Naive thymus-derived CD8-positive, alpha-beta T cell (primary cell): ENCODE measurements at regions of chr3 and their contacts with region 1.

Region 1: DNA sequence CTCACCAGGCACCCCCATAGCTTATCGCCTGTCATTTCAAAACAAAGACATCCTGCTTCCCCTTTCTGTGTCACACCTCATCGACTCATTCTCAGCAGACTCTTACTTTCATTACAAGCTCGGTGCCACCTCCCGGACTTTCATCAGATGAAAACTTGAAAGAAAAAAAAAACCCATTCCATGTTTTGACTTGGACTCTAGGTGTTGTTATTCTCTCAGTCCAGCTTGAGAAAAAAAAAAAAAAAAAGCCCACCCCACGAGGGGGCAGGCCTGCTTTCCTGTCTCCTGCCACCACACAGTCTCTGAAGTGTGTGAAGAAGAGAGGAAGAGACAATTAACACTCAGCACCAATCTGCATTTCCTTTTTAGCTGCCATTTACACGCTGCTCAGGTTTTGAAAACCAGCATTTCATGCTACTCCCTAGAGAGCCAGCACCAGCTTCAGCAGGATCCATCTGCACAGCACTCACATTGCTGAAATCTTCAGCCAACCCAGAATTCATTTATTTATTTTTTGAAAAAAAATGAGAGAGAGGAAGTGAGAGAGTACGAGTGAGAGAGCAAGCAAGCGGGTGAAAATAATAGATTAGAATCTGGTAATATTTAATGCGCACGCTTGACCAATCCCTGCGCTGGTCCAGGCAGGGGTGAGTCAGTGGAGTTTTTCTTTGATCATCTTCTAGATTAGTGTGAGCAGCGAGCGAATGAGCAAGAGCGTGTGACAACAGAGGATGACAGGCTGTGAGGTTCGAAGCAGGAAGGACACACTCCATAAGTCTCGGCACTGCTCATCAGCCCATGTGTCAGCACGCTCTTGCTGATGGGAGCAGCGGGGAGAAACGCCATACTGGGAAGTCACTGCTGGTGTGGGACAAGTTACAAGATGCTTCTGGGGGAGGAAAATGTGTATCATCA is 23.5 kb downstream of the ZNF80 start:
- DNase-seq: peak; percentile 28 to 86 (median 68)
- ATAC-seq: peak; percentile 50 to 53
- H3K4me3 Mint-ChIP-seq: no peak overlapping the region
- H3K27ac Mint-ChIP-seq: no peak overlapping the region
- H3K4me1 Mint-ChIP-seq: peaks cover 0 to 21% (median 14%) of the 10 kb centered on the region in 4 donors
- H3K27me3 Mint-ChIP-seq: no peaks in the 10 kb centered on the region

Region 2: DNA sequence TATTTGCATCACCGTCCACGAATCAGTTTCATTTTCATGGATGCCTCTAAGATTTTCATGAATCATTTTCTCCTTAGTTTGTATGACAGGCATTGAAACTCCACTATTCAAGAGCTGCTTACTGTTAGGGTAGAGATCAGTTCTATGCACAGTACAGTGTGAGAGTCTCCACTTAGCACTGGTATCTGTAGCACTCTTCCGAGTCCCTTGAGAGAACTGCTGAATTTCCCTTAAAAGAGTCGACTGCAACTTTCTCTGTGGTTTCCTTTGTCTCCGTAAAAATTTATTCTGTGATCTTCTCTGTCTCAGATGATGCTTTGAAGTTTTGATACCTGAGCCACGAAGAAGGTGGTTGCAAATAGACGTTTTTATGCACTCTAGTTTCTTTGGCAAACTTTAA is 1208.3 kb before region 1 on chr3:
- POLR2A ChIA-PET with region 1: interaction called, 10 read pairs
- DNase-seq: peak in 5 of 10 donors; percentile 18 to 81 (median 61)
- ATAC-seq: peak; percentile 89 to 90
- H3K4me3 Mint-ChIP-seq: peak overlapping the region; percentile 57 to 87 (median 78)
- H3K27ac Mint-ChIP-seq: peak overlapping the region; percentile 89 to 98 (median 95)
- H3K4me1 Mint-ChIP-seq: peaks cover 34 to 84% (median 74%) of the 10 kb centered on the region in 4 donors
- H3K27me3 Mint-ChIP-seq: no peaks in the 10 kb centered on the region

Region 3: DNA sequence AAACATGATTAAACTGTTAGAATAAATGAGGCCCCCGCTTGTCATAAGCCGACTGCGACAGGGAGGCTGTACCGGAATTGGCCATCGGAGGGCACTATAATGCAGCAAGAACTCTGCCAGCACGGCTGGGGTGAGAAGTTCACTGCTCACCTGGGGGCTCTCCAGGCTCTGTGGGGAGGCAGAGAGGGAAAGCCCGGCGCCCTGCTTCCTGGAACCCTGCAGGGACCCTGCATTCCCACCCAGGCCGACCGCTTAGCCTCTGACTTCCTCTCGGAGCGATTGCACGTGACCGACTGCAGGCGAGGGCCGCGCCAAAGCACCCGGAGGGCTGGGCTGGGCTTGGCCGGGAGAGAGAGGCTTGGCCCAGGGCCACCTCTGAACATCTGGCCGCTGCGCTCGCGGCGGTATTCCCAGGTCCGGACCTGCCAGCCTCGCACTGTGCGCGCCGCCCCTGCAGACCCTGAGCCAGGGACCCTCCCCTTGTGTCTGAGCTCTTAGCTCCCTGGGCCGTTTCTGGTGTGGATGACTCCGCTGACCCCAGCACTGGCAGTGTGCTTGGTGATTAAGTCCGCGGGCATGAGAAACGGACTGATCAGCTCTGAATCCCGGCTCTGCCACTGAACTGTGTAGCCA is 61.2 kb before region 1 on chr3:
- POLR2A ChIA-PET with region 1: interaction called, 13 read pairs
- DNase-seq: peak; percentile 68 to 90 (median 81)
- ATAC-seq: peak; percentile 94 to 95
- H3K4me3 Mint-ChIP-seq: peak overlapping the region; percentile 57 to 78 (median 67)
- H3K27ac Mint-ChIP-seq: peak overlapping the region in 8 of 10 donors; percentile 1 to 74 (median 42)
- H3K4me1 Mint-ChIP-seq: peaks cover 2 to 15% (median 6%) of the 10 kb centered on the region in 4 donors
- H3K27me3 Mint-ChIP-seq: no peaks in the 10 kb centered on the region

Region 4: DNA sequence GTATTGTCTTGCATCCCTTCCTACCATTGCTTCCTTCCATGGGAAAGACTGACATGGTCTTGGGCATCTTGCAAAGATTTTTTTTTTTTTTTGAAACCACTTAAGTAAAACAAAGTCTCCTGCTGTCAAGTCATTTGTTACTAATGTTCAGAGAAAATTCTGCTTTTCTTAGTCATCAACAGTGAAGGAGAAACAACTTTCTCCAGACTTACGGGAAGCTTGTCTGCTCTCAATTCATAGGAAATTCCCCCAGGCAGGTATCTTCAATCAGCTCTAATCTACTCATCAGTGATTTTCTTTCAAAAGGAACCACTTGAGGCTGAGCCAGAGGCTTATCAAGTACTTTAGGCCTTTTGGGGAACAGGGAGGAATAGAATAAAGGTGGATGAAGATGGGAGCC is 19.1 kb before region 1 on chr3:
- POLR2A ChIA-PET with region 1: no interaction called
- DNase-seq: no peak
- ATAC-seq: no peak
- H3K4me3 Mint-ChIP-seq: no peak overlapping the region
- H3K27ac Mint-ChIP-seq: no peak overlapping the region
- H3K4me1 Mint-ChIP-seq: no peaks in the 10 kb centered on the region
- H3K27me3 Mint-ChIP-seq: no peaks in the 10 kb centered on the region

Region 5: DNA sequence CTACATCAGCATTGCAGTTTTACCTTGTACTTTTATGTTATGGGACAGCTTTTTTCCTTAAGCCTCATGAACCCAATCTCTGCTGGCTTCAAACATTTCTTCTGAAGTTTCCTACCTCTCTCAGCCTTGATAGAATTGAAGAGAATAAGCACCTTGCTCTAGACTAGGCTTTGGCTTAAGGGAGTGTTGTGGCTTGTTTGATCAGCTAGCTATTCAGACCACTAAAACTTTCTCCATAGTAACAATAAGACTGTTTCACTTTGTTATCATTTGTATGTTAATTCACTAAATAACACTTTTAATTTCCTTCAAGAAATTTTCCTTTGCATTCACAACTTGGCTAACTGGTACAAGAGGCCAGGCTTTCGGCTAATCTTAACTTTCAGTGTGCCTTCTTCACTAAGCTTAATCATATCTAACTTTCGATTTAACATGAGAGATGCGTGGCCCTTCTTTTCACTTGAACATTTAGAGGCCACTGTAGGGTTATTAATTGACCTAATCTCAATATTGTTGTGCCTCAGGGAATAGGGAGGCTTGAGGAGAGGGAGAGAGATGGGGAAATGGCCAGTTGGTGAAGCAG is 71.9 kb after region 1 on chr3:
- POLR2A ChIA-PET with region 1: interaction called, 63 read pairs
- DNase-seq: peak in 3 of 10 donors; percentile 17 to 43 (median 41)
- ATAC-seq: peak; percentile 93 to 98
- H3K4me3 Mint-ChIP-seq: peak overlapping the region in 9 of 10 donors; percentile 0 to 75 (median 60)
- H3K27ac Mint-ChIP-seq: peak overlapping the region; percentile 71 to 95 (median 88)
- H3K4me1 Mint-ChIP-seq: peaks cover 10 to 24% (median 20%) of the 10 kb centered on the region in 4 donors
- H3K27me3 Mint-ChIP-seq: no peaks in the 10 kb centered on the region

Region 6: DNA sequence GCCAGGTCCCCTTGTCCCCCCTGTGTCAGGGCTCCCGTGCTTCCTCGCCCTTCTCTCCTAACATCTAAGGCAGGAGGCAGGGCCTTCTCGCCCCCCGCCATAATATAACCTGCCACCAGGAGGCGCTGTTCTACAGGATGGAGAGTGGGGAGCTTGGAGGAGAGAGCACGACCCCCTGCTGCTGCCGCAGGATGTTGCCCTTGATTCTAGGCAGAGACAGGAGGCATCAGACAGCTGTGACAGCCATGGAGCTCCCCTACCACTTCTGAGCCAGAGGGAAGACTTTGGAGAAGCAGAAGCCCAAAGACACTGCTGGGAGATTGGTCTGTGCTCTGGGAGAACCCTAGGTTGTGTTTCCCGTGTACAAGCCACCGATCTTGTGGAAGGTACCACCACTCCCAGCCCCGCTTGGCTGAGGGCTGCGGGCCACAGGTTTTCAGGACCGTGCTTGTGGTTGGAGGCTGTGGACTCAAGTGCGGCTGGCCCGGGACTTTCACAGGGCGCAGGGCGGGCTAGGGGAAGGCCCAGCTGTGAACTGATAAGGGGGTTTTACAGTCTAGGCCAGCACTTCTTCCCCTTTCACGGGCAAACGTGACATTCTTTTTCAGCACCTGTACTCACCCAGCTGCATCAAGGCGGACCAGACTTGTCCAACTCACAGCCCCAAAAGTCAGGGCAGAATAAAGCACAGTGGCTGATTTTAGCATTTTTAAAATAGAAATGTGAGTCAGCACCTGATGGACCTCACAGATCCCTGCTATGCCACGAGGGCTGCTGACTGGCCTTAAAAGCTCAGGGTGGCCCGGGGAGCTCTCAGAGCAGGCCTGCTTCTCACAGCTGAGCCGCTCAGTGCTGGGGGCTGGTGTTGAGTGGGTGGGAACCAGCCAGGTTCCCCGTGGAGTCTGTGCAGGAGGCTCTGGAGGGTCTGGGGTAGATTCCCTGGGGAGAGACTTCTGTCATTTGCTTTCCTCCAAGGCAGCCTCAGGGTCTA is 77.3 kb after region 1 on chr3:
- POLR2A ChIA-PET with region 1: interaction called, 63 read pairs
- DNase-seq: peak; percentile 65 to 95 (median 86)
- ATAC-seq: peak; percentile 83 to 86
- H3K4me3 Mint-ChIP-seq: peak overlapping the region; percentile 51 to 88 (median 67)
- H3K27ac Mint-ChIP-seq: peak overlapping the region; percentile 82 to 93 (median 90)
- H3K4me1 Mint-ChIP-seq: peaks cover 9 to 49% (median 14%) of the 10 kb centered on the region in 4 donors
- H3K27me3 Mint-ChIP-seq: no peaks in the 10 kb centered on the region

Region 7: GRCh38 chr3:114299421-114299820 is 85.5 kb after region 1 on chr3:
- POLR2A ChIA-PET with region 1: interaction called, 63 read pairs
- DNase-seq: peak in 6 of 10 donors; percentile 3 to 66 (median 34)
- ATAC-seq: peak; percentile 70 to 73
- H3K4me3 Mint-ChIP-seq: peak overlapping the region in 8 of 10 donors; percentile 6 to 80 (median 40)
- H3K27ac Mint-ChIP-seq: peak overlapping the region in 6 of 10 donors; percentile 12 to 92 (median 45)
- H3K4me1 Mint-ChIP-seq: peaks cover 0 to 49% (median 14%) of the 10 kb centered on the region in 4 donors
- H3K27me3 Mint-ChIP-seq: no peaks in the 10 kb centered on the region

Region 8: DNA sequence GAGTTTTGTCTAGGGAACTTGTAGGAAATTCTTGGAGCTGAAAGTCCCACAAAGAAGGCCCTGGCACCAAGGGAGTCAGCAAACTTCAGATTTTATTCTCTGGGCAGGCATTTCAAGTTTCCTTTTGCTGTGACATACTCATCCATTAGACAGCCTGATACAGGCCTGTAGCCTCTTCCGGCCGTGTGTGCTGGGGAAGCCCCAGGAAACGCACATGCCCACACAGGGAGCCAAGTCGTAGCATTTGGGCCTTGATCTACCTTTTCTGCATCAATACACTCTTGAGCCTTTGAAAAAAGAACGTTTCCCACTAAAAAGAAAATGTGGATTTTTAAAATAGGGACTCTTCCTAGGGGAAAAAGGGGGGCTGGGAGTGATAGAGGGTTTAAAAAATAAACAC is 94.9 kb after region 1 on chr3:
- POLR2A ChIA-PET with region 1: interaction called, 12 read pairs
- DNase-seq: peak in 4 of 10 donors; percentile 14 to 31 (median 27)
- ATAC-seq: peak; percentile 90 to 93
- H3K4me3 Mint-ChIP-seq: peak overlapping the region in 9 of 10 donors; percentile 3 to 71 (median 34)
- H3K27ac Mint-ChIP-seq: peak overlapping the region; percentile 51 to 98 (median 88)
- H3K4me1 Mint-ChIP-seq: peaks cover 12 to 43% (median 34%) of the 10 kb centered on the region in 4 donors
- H3K27me3 Mint-ChIP-seq: peaks cover 0 to 8% (median 1%) of the 10 kb centered on the region in 5 donors